ENCODE measurements at regions of chr4 and their contacts with region 1.

Region 1: GRCh38 chr4:153142700-153143438 is 61.4 kb upstream of the TRIM2 start:
- DNase-seq: peak; percentile 60
- CTCF ChIP-seq: peak; percentile 69

Region 2: DNA sequence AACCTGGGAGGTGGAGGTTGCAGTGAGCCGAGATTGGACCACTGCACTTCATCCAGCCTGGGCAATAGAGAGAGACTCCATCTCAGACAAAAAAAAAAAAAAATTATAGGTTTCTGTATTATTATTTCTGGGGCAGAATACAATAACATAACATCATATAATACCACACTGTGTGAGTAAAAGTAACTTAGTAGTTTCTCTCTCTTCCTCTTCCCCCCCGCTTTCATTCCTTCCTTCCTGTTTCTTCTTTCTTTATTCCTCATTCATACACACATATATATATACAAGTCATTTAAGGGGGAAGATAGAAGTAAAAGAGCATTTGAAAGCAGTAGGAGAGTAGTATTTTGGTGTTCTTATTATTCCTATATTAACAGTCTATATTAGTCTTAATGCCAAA is 262.6 kb before region 1 on chr4:
- in situ Hi-C with region 1: no loop called
- DNase-seq: no peak
- CTCF ChIP-seq: no peak

Region 3: GRCh38 chr4:153296040-153296823 is 153.4 kb after region 1 on chr4:
- in situ Hi-C with region 1: loop called (anchors 10 kb)
- DNase-seq: no peak
- CTCF ChIP-seq: no peak